ENCODE measurements at regions of chr20 and their contacts with region 1.

Region 1: DNA sequence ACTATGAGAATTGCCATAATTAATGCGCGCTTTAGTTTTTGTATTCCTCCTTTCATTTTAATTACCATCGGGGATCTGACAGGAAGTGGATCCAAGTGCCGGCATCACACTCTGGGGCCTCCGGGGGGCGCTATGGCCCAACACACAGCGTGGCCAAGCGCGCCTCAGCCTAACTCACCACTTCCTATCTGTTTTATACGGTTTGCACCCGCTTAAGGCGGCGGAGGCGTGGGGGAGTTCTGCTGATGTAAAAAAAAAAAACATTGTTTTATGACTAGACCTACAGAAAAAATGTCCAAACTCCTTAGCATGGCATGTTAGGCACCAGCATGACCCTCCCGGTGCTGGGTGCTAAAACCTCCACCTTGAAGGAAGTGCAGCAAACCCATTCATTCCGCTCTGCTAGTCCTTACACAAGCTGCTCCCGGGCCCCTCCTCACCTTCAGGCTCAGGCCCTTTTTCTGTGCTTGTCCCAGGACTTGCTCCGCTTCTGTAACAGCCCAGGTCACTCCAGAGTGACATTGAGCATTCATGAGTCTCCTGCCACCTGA is 4.5 kb upstream of the EBF4 start:
- H3K4me3 Mint-ChIP-seq: no peak overlapping the region
- H3K27ac Mint-ChIP-seq: no peak overlapping the region
- H3K4me1 Mint-ChIP-seq: peaks cover 29% of the 10 kb centered on the region
- H3K27me3 Mint-ChIP-seq: peaks cover 57% of the 10 kb centered on the region

Region 2: DNA sequence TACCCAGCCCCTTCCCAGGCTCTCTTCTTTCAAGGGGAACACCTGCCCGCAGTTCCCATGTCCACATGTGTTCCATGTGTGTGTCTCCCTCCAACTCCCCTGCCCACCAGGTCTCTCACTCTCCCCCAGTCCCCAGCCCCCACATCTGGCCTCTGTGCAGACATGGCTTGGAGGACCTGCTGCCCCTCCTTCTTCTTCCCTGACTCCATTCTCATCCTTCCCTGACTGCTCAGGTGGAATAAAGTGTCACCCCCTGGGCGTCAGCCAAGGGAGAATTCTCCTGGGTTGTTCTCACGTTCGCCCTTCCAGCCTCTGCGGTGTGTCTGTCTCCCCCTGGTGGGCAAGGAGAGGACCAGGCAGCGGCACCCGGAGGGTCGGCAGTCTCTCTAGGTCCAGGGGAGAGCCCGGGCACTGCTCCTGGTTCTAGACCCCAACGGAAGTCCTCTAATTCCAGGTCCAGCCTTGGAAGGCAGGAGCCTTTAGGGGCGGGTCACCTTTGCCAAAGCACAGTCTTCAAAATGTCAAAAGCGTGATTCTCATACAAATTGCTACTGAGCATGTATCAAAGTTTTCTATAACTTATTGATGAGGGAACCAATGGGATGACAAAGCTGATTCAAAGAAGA is 54.9 kb after region 1 on chr20:
- intact Hi-C with region 1: loop called (anchors 2 kb)
- H3K4me3 Mint-ChIP-seq: no peak overlapping the region
- H3K27ac Mint-ChIP-seq: no peak overlapping the region
- H3K4me1 Mint-ChIP-seq: peaks cover 7% of the 10 kb centered on the region
- H3K27me3 Mint-ChIP-seq: peaks cover 56% of the 10 kb centered on the region

Region 3: DNA sequence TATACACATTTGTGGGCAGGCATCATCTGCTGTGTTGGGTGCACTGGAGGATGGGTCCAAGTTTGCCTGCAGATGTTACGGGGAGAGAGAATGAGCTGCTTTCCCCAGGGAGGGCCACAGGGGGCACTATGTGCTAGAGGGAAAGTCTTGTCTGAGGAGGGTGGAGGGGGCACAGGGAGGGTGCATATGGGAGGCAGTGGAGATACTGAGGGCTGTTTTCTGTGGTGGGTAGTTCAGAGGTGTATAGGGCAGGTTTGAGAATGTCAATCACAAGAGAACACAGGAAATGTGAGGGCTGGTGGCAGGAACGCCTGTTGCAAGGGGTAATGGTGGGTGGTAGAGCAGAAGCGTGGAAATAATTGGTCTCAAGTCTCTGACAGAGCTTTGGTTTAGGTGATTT is 177.5 kb after region 1 on chr20:
- intact Hi-C with region 1: loop called (anchors 10 kb)
- H3K4me3 Mint-ChIP-seq: no peak overlapping the region
- H3K27ac Mint-ChIP-seq: no peak overlapping the region
- H3K4me1 Mint-ChIP-seq: peaks cover 22% of the 10 kb centered on the region
- H3K27me3 Mint-ChIP-seq: no peaks in the 10 kb centered on the region

Measured in dendritic cell treated with granulocyte-macrophage colony-stimulating factor and Interleukin-4, amounts not matched to agents 40 ng/mL and 50 ng/mL, for 4 days (primary cell).